GM12878 (cell line): ENCODE measurements at regions of chr1 and their contacts with region 1.

Region 1: DNA sequence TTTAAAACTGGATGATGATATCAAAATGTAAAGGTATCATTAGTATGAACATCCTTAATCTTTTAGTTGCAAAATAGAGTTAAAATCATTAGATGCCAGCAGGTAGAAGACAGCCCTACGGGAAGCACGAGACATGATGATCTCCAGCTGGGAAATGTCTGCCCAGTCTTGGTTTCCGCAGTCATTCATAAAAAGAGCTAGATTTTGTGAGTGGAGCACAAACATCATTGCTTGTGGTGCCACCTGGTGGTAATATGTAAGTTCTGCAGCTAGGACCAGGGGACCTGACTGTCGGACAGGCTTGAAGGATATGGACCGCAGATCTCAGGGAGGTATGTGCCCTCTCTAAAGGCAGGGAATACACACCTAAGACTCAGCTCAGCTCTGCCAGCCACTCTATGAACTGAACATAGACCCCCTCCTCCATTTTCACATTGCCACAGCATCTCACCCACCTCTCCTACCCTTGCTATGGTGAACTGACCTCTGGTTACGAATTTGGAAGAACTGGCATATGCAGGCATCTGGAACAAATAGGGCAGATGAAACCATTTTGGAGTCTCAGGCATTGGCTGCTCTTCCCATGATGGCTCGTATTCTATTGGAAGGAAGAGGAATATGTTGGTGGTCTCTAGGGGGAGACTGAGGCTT is 9.2 kb downstream of the FCMR start:
- DNase-seq: no peak
- ATAC-seq: peak; percentile 78
- H3K4me3 ChIP-seq: no peak overlapping the region
- H3K27ac ChIP-seq: no peak overlapping the region
- H3K4me1 ChIP-seq: peaks cover 38% of the 10 kb centered on the region
- H3K27me3 ChIP-seq: no peaks in the 10 kb centered on the region
- CTCF ChIP-seq: peak; percentile 71 to 90 (median 77); a peak in 5 of 6 replicates
- EP300 ChIP-seq: no peak
- POLR2A ChIP-seq: peak; percentile 40; the same call in 1 of the 2 replicates
- RAD21 ChIP-seq: peak; percentile 76

Region 2: GRCh38 chr1:206524739-206525369 is 387.7 kb before region 1 on chr1:
- CTCF ChIA-PET with region 1: no interaction called
- POLR2A ChIA-PET with region 1: no interaction called
- RAD21 ChIA-PET with region 1: no interaction called
- SMC1A ChIA-PET with region 1: no interaction called
- in situ Hi-C with region 1: no loop called
- intact Hi-C with region 1: no loop called
- DNase-seq: no peak
- ATAC-seq: peak; percentile 40
- H3K4me3 ChIP-seq: no peak overlapping the region
- H3K27ac ChIP-seq: no peak overlapping the region
- H3K4me1 ChIP-seq: no peaks in the 10 kb centered on the region
- H3K27me3 ChIP-seq: no peaks in the 10 kb centered on the region
- CTCF ChIP-seq: no peak
- EP300 ChIP-seq: no peak
- POLR2A ChIP-seq: no peak
- RAD21 ChIP-seq: no peak

Region 3: GRCh38 chr1:206658264-206658980 is 254.1 kb before region 1 on chr1:
- CTCF ChIA-PET with region 1: interaction called, 20 read pairs
- POLR2A ChIA-PET with region 1: no interaction called
- RAD21 ChIA-PET with region 1: interaction called, 9 read pairs
- SMC1A ChIA-PET with region 1: interaction called, 15 read pairs
- in situ Hi-C with region 1: no loop called
- intact Hi-C with region 1: no loop called
- DNase-seq: no peak
- ATAC-seq: peak; percentile 93
- H3K4me3 ChIP-seq: no peak overlapping the region
- H3K27ac ChIP-seq: no peak overlapping the region
- H3K4me1 ChIP-seq: peaks cover 9% of the 10 kb centered on the region
- H3K27me3 ChIP-seq: no peaks in the 10 kb centered on the region
- CTCF ChIP-seq: peak; percentile 74 to 99 (median 98)
- EP300 ChIP-seq: no peak
- POLR2A ChIP-seq: no peak
- RAD21 ChIP-seq: peak; percentile 62

Region 4: DNA sequence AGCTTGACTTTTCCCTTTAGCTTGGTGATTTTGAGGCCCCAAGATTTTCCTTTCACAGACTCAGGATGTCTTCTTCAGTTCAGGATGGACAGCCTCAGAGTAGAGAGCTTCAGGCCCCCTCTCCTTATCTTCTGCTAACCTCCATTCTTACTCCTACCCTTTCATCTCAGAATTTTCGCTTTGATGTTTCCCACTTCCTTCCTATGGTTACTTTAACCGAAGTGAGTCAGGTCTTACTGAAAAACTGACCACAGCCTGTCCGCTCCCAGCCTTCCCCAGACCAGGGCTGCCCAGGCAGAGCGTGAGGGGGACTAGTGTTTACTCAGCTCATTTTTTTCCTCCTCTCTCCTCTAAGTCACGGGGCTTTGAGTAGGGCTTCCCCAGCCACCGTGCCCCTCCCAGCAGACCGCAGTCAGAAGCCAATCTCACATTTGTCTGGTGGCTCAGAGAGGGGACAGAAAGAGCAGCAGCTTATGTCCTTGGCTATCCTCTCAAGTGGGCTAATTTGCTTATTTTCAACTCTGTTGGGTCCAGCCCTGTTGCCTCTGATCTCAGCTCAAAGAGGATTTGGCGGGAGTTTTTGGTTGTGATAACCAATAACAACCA is 146.2 kb before region 1 on chr1:
- CTCF ChIA-PET with region 1: interaction called, 9 read pairs
- POLR2A ChIA-PET with region 1: no interaction called
- RAD21 ChIA-PET with region 1: interaction called, 5 read pairs
- SMC1A ChIA-PET with region 1: interaction called, 17 read pairs
- in situ Hi-C with region 1: no loop called
- intact Hi-C with region 1: no loop called
- DNase-seq: peak; percentile 82
- ATAC-seq: peak; percentile 72
- H3K4me3 ChIP-seq: no peak overlapping the region
- H3K27ac ChIP-seq: peak overlapping the region; percentile 28
- H3K4me1 ChIP-seq: peaks cover 48% of the 10 kb centered on the region
- H3K27me3 ChIP-seq: no peaks in the 10 kb centered on the region
- CTCF ChIP-seq: no peak
- EP300 ChIP-seq: peak; percentile 45 to 55; a peak in 2 of 4 replicates
- POLR2A ChIP-seq: no peak
- RAD21 ChIP-seq: no peak

Region 5: GRCh38 chr1:206846487-206846886 is 66.1 kb before region 1 on chr1:
- CTCF ChIA-PET with region 1: interaction called, 14 read pairs
- POLR2A ChIA-PET with region 1: no interaction called
- RAD21 ChIA-PET with region 1: no interaction called
- SMC1A ChIA-PET with region 1: interaction called, 3 read pairs
- in situ Hi-C with region 1: no loop called
- intact Hi-C with region 1: no loop called
- DNase-seq: no peak
- ATAC-seq: no peak
- H3K4me3 ChIP-seq: no peak overlapping the region
- H3K27ac ChIP-seq: no peak overlapping the region
- H3K4me1 ChIP-seq: no peaks in the 10 kb centered on the region
- H3K27me3 ChIP-seq: no peaks in the 10 kb centered on the region
- CTCF ChIP-seq: no peak
- EP300 ChIP-seq: no peak
- POLR2A ChIP-seq: no peak
- RAD21 ChIP-seq: no peak

Region 6: DNA sequence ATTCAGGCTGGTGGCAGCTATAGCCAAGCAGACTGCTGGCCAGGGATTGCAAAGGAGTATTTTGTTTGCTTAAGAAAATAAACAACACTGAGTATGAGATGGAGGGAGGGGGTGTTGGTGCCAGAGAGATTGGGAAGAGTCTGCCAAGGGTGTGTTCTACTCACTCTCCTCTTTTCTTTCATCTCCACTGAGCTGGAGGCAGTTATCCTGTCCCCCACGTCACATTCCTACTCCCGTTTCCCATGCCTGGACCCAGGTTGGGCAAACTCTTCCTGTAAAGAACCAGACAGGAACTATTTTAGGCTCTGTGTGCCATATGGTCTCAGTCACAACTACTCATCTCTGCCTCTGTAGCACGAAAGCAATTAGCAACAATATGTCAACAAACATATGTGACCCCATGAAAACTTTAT is 16.7 kb before region 1 on chr1:
- CTCF ChIA-PET with region 1: interaction called, 16 read pairs
- POLR2A ChIA-PET with region 1: interaction called, 3 read pairs
- RAD21 ChIA-PET with region 1: interaction called, 9 read pairs
- SMC1A ChIA-PET with region 1: interaction called, 11 read pairs
- in situ Hi-C with region 1: no loop called
- intact Hi-C with region 1: no loop called
- DNase-seq: no peak
- ATAC-seq: no peak
- H3K4me3 ChIP-seq: no peak overlapping the region
- H3K27ac ChIP-seq: no peak overlapping the region
- H3K4me1 ChIP-seq: no peaks in the 10 kb centered on the region
- H3K27me3 ChIP-seq: no peaks in the 10 kb centered on the region
- CTCF ChIP-seq: no peak
- EP300 ChIP-seq: no peak
- POLR2A ChIP-seq: no peak
- RAD21 ChIP-seq: no peak

Region 7: DNA sequence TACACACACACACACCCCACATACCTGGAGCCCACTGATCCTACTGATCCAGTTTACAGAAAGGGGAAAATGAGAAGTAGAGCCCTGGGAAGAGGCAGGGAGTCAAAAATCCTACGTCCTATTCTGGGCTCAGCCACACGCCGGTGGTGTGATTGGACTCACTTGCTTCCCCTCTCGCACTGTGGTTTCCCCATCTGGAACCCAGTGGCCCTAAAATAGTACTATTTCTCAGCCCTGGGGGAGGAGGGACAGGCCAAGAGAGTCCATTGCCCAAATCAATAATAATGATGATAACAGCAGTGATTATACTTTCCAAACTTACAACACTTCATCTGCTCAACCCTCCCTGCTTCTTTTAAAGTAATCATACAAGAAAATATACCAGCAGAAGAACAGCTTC is 36.6 kb after region 1 on chr1:
- CTCF ChIA-PET with region 1: interaction called, 17 read pairs
- POLR2A ChIA-PET with region 1: no interaction called
- RAD21 ChIA-PET with region 1: interaction called, 6 read pairs
- SMC1A ChIA-PET with region 1: interaction called, 5 read pairs
- in situ Hi-C with region 1: no loop called
- intact Hi-C with region 1: no loop called
- DNase-seq: no peak
- ATAC-seq: no peak
- H3K4me3 ChIP-seq: no peak overlapping the region
- H3K27ac ChIP-seq: no peak overlapping the region
- H3K4me1 ChIP-seq: peaks cover 40% of the 10 kb centered on the region
- H3K27me3 ChIP-seq: no peaks in the 10 kb centered on the region
- CTCF ChIP-seq: no peak
- EP300 ChIP-seq: no peak
- POLR2A ChIP-seq: no peak
- RAD21 ChIP-seq: no peak

Region 8: DNA sequence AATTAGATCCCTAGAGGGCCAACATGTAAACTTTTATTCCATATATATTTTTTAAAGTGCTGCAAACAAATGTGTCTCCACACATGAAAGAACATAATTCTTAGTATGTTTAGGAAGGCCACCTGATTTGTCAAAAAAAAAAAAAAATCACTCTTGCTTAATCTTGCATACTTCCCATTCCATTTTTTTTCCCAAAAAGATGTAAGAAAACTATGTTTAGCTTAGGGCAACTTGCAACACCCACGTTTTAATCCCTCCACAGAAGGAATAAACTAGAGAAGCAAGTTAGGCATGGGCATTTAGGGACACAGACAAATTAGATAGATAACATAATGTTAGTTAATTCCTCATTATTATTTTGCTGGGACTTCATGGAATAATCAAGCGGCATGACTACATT is 132.9 kb after region 1 on chr1:
- CTCF ChIA-PET with region 1: interaction called, 10 read pairs
- POLR2A ChIA-PET with region 1: no interaction called
- RAD21 ChIA-PET with region 1: no interaction called
- SMC1A ChIA-PET with region 1: no interaction called
- in situ Hi-C with region 1: no loop called
- intact Hi-C with region 1: no loop called
- DNase-seq: no peak
- ATAC-seq: no peak
- H3K4me3 ChIP-seq: no peak overlapping the region
- H3K27ac ChIP-seq: no peak overlapping the region
- H3K4me1 ChIP-seq: no peaks in the 10 kb centered on the region; the same call in 1 of the 2 replicates
- H3K27me3 ChIP-seq: no peaks in the 10 kb centered on the region
- CTCF ChIP-seq: no peak
- EP300 ChIP-seq: no peak
- POLR2A ChIP-seq: no peak
- RAD21 ChIP-seq: no peak